AG04449 (cell line): ENCODE measurements at regions of chr12 and their contacts with region 1.

Region 1: GRCh38 chr12:48851883-48852733 is at the start of gene DDX23:
- DNase-seq: peak; percentile 83
- H3K4me3 ChIP-seq: peak within 1 kb of the TSS; percentile 97
- CTCF ChIP-seq: no peak

Region 2: GRCh38 chr12:48532601-48533000 is 319.5 kb before region 1 on chr12:
- CTCF ChIA-PET with region 1: no interaction called
- POLR2A ChIA-PET with region 1: no interaction called
- DNase-seq: no peak
- H3K4me3 ChIP-seq: no peak overlapping the region
- CTCF ChIP-seq: no peak

Region 3: DNA sequence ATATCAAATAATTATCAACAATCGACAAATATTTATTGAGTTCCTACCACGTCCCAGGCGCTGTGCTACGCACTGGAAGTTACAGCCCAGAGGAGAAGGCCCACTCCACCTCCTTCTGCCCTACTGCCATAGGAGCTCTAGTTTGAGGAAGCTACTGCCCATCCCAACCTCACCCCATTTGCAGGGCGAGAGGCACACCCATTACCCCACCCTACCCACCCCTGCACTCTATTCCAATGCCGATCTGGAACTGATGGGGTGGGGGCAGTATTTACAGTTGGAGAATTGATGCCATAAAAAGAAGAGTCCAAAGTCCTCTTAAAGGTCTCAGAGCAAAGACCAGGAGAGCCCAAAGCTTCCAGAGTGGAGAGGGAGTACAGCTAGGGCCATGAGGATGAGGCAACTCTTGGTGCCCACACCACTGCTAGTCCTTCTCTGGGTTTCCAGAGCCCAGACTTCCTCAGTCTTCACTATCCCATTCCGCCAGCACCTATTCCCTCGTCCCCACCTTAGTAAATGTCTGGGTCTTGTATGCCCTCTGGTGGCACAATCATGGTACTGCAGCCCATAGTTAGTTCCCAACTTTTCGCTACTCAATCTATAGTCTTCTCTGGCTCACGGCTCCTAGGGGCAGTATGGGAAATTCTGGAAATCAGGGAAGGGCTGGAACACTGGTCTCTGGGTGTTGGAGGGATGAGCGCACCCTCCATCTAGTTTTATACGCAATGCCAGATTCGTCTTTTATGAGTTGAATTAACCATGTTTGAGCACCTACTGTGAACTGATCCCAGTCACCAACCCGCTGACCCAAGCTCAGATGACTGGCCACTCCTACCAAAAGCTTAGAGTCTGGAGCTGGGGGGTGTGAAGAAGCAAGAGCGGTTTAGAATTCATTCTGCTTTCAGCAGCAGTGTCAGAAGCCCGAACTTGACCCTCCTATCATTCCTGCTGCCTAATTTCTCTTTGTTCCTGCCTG is 56.3 kb before region 1 on chr12:
- CTCF ChIA-PET with region 1: no interaction called
- POLR2A ChIA-PET with region 1: no interaction called
- DNase-seq: no peak
- H3K4me3 ChIP-seq: no peak overlapping the region
- CTCF ChIP-seq: peak; percentile 81

Region 4: DNA sequence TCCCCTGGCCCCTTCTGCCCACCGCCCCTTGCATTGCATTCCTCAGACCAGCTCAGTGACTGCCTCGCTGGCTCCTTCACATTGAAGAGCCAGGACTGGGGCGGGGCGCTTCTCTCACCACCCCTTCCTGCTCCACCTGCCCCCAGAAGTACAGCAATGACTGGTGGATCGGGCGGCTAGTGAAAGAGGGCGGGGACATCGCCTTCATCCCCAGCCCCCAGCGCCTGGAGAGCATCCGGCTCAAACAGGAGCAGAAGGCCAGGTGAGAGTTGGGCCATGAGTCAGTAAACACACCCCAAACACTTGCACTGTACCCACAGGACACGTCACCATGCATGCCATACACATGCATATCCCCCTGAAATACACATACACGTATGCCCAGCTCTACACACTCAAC is 28.0 kb before region 1 on chr12:
- CTCF ChIA-PET with region 1: interaction called, 14 read pairs
- POLR2A ChIA-PET with region 1: interaction called, 5 read pairs
- DNase-seq: no peak
- H3K4me3 ChIP-seq: no peak overlapping the region
- CTCF ChIP-seq: no peak

Region 5: GRCh38 chr12:48873096-48873495 is 21.0 kb after region 1 on chr12:
- CTCF ChIA-PET with region 1: interaction called, 852 read pairs
- POLR2A ChIA-PET with region 1: interaction called, 3 read pairs
- DNase-seq: no peak
- H3K4me3 ChIP-seq: no peak overlapping the region
- CTCF ChIP-seq: no peak

Region 6: DNA sequence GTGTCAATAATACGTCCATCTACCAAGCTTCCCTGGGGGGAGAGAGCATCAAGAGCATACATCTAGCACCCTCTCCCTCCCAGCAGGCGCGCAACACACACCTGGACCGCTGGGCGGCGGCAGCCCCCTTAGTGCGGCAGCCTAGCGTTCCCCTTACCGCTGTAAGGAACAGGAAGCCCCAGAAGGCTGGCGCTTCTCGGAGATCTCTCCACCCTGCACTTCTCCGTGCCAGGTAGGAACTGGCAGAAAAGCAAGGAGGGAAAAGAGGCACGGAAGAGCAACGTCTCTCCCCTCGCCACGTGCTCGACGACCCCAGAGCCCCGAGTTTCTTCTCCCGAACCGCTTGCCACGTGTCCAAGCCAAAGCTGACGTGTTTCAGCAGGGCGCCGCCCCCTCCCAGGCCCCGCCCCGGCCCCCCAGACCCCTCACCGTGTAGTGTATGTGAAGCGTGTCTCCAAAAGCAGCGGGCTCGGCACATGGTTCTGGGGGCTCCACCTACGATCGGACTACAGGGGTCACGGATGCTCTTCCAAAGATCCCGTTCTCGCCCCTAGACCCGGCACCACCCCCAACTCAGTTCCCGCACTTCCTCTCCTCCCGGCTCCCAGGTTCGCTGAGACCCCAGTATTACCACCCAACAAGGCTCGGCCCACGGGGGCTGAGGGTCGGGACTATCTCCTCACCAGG is 72.7 kb after region 1 on chr12:
- CTCF ChIA-PET with region 1: interaction called, 20 read pairs
- POLR2A ChIA-PET with region 1: interaction called, 4 read pairs
- DNase-seq: no peak
- H3K4me3 ChIP-seq: peak overlapping the region; percentile 89
- CTCF ChIP-seq: peak; percentile 67

Region 7: DNA sequence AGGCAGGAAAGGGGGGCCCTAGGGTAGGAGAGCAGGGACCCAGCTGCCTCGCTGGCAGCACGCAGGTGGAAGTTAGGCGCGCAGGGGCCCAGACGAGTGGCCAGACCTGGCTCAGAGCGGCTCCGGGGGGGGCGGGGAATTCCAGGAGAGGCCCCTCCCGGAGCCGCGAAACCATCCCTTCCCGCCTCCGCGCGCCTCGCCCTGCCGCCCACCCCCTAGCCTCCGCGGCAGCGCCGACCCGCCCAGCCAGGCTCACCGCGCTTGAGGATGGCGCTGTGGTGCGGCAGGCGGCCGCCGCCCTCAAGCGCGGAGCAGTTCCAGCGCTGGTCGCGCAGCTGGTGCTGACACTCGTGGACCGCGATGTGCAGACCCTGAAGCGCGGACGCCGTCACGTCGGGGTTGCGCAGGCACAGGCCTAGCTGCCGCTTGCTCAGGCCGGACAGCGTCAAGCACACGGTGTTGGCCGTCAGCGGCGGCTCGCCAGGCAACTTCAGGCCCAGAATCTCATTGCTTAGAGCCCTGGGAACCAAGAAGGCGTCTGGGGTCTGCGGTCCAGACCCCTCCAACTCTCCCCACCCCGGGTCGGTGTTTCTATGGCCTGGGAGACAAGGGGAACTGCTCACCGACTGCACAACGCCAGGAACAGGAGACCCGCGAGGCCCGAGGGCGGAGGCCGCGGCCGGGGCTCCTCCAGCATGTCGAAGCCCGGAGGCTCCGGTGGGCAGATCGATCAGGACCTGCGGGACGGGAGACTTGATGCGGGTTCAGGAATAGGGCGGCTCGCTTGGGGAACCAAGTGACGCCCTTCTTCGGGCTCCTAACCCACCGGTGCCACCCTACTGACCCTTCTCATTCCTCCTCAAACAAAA is 118.0 kb after region 1 on chr12:
- CTCF ChIA-PET with region 1: interaction called, 14 read pairs
- POLR2A ChIA-PET with region 1: no interaction called
- DNase-seq: no peak
- H3K4me3 ChIP-seq: no peak overlapping the region; the same call in 1 of the 2 replicates
- CTCF ChIP-seq: peak; percentile 19

Region 8: GRCh38 chr12:48995061-48995879 is 143.2 kb after region 1 on chr12:
- CTCF ChIA-PET with region 1: interaction called, 66 read pairs
- POLR2A ChIA-PET with region 1: no interaction called
- DNase-seq: no peak
- H3K4me3 ChIP-seq: peak overlapping the region; percentile 25
- CTCF ChIP-seq: peak; percentile 83

Region 9: GRCh38 chr12:49288412-49288853 is 436.3 kb after region 1 on chr12:
- CTCF ChIA-PET with region 1: no interaction called
- POLR2A ChIA-PET with region 1: no interaction called
- DNase-seq: no peak
- H3K4me3 ChIP-seq: no peak overlapping the region
- CTCF ChIP-seq: peak; percentile 68